ENCODE measurements at regions of chr2 and their contacts with region 1.

Region 1: GRCh38 chr2:72770879-72771461 is 54.9 kb downstream of the EXOC6B start:
- DNase-seq: peak; percentile 65 to 69 (median 67)
- H3K4me3 ChIP-seq: no peak overlapping the region
- H3K4me3 Mint-ChIP-seq: no peak overlapping the region
- H3K27ac ChIP-seq: no peak overlapping the region
- H3K27ac Mint-ChIP-seq: no peak overlapping the region
- H3K4me1 ChIP-seq: no peaks in the 10 kb centered on the region
- H3K4me1 Mint-ChIP-seq: no peaks in the 10 kb centered on the region
- H3K27me3 ChIP-seq: no peaks in the 10 kb centered on the region
- H3K27me3 Mint-ChIP-seq: no peaks in the 10 kb centered on the region

Region 2: DNA sequence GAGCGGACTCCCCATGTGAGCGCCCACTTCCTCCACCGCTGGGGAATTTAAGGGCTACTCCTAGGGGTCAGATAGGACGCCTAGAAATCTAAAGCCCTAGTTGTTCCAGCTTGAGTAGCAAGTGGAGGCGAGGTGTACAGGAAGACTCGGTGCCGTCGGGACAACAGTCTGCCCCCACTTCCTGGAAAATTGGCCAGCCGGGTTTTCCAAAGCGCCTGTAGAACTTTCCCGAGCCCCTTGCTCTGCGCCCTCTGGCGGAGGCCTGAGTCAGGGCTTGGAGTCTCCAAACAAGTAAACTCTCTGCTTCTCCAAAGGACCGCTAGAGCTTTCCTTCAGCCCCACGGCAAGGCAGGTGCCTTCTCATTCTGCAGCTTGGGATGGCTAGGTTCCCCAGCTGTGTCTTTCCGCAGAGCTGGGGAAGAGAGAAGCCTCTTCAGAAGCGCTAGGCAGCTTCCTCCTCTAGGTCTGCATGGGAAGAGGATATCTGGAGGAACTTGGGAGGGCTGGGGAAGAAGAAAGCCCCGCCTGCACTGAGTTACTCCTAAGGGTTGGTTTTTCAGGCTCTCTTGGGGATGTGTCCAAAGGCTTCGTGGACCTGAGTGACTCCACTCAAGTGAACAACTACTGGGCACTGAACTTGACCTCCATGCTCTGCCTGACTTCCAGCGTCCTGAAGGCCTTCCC is 116.9 kb after region 1 on chr2:
- CTCF ChIA-PET with region 1: interaction called, 7 read pairs
- POLR2A ChIA-PET with region 1: no interaction called
- intact Hi-C with region 1: loop called (anchors 1 kb)
- DNase-seq: peak in 4 of 5 donors; percentile 13 to 38 (median 32)
- H3K4me3 ChIP-seq: peak overlapping the region; percentile 36 to 51
- H3K4me3 Mint-ChIP-seq: peak overlapping the region; percentile 67 to 85 (median 80)
- H3K27ac ChIP-seq: no peak overlapping the region
- H3K27ac Mint-ChIP-seq: no peak overlapping the region
- H3K4me1 ChIP-seq: peaks cover 7% of the 10 kb centered on the region
- H3K4me1 Mint-ChIP-seq: peaks cover 3 to 10% (median 6%) of the 10 kb centered on the region in 4 donors
- H3K27me3 ChIP-seq: peaks cover 30% of the 10 kb centered on the region
- H3K27me3 Mint-ChIP-seq: peaks cover 33 to 54% of the 10 kb centered on the region in 2 donors

Region 3: DNA sequence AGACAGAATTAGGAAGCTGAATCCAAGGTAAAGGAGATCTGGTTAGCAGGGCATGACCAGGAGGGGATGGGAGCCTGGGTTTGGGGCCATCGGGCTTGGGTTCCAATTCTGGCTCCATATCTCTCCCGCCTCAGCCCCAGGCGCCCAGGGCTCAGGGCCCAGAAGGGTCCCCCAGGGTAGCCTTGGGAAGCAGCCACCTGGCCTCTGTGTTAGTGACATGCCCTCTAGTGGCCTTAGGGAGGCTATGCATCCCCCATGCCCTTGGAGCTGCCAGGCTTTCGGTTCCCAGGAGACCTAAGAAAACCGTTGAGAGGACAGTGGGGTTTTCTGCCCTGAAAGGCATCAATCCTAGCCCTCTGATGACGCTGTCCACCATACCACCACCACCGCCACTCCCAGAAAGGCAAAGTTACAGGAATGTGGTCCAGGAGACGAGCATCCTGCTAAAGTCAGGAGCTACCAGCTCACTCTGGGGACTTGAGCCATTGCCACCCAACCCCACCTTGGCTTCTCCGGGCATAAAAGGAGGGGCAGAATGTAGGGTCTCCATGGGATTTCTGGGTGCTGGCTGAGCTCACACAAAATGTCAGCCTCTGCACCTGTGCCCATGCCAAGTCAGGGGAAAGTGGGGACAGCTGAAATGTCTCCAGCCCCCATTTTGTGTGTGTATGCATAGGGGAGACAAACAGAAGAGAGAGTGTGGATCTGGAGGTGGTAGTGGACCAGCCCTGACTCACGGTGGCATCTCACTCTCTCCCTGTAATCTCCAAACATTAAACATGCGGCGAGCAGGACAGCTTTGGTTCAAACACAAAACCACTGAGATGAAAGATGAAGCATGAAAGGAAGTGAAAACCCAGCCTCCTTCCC is 202.8 kb after region 1 on chr2:
- CTCF ChIA-PET with region 1: interaction called, 3 read pairs
- POLR2A ChIA-PET with region 1: no interaction called
- intact Hi-C with region 1: loop called (anchors 1 kb)
- DNase-seq: peak; percentile 9 to 40 (median 20)
- H3K4me3 ChIP-seq: no peak overlapping the region
- H3K4me3 Mint-ChIP-seq: no peak overlapping the region
- H3K27ac ChIP-seq: no peak overlapping the region
- H3K27ac Mint-ChIP-seq: no peak overlapping the region
- H3K4me1 ChIP-seq: no peaks in the 10 kb centered on the region
- H3K4me1 Mint-ChIP-seq: peaks cover 0 to 6% (median under 1%) of the 10 kb centered on the region in 4 donors
- H3K27me3 ChIP-seq: no peaks in the 10 kb centered on the region
- H3K27me3 Mint-ChIP-seq: peaks cover 2% of the 10 kb centered on the region in 2 donors

Measured in CD4-positive, alpha-beta memory T cell (primary cell).